CD4-positive, alpha-beta T cell (primary cell): ENCODE measurements at regions of chr18 and their contacts with region 1.

Region 1: DNA sequence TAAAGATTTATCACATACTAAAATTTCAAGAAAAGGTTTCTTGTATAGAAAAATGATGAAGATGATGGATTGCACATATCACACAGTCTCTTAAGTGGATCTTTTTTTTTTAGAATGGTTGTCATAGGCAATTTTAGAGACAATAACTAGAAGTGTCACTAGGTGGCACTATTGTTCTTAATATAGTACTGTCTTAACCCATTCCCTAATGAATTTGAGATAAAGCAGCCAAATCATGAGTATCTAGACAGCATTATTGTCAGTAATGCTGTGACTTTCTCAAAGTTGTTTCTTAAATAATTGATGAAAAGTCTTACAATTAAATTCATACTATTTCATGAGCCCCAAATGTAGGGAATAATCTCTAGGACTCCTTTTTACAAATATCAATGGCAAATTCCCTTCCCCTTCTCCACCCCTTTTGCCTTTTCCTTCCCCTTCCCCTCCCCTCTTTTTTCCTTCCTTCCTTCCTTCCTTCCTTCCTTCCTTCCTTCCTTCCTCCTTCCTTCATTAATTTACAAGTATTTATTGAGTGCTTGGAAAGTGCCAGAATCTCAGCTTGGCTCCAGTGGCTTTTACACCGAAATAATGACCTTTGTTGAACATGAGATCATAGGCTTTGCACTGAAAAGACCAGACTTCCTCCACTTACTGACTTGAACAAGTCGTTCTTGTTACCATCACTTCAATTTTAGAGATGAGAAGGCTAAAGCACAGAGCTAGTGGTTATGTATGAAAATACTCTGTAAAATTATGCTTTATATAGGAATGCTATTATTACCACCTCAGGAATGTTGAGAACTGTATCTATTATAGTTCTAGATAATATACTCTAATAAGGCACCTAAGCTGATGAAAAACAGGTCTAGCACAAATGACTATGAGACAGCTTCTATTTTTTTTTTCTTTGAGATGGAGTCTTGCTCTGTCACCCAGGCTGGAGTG is 19.8 kb downstream of the MYL12B start:
- DNase-seq: peak in 3 of 14 experiments; percentile 79 to 83 (median 83)
- ATAC-seq: peak; percentile 87
- H3K4me3 ChIP-seq: no peak overlapping the region
- H3K4me3 Mint-ChIP-seq: no peak overlapping the region
- H3K27ac ChIP-seq: no peak overlapping the region
- H3K27ac Mint-ChIP-seq: no peak overlapping the region
- H3K4me1 ChIP-seq: no peaks in the 10 kb centered on the region
- H3K4me1 Mint-ChIP-seq: no peaks in the 10 kb centered on the region
- H3K27me3 ChIP-seq: no peaks in the 10 kb centered on the region
- H3K27me3 Mint-ChIP-seq: no peaks in the 10 kb centered on the region
- CTCF ChIP-seq: peak; percentile 82

Region 2: DNA sequence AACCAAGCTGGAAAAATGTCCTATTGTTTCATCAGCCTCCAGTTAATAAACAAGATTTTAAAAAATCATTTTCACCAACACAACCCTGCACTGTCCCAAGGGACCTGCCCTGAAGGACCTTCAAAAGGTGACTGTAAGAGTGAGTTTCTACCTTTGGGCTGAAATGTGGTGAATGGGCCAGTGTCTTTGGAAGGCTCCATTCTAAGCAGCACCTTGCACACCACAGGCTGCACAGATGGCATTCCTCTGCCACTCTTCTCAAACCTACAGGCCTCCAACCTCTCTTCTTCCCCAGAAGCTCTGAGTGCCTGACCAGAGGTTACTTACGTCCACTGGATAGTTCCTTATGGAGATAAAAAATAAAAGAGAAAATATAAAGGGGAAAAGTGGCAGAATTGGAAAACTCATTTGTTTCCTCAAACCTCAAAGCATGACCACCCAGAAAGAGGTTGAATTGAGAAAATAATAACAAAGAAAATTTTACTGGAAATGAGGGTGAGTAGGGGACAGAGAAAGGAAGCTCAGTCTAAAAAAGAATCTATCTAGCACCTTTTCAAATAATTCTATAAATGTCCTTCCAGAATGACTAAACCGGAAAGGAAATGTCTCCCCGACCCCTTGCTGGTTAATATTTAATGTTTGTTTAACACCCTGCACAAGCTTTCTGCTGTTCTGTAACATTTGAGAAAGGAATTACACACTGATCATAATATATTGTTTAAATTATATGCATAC is 886.1 kb before region 1 on chr18:
- CTCF ChIA-PET with region 1: no interaction called
- POLR2A ChIA-PET with region 1: no interaction called
- intact Hi-C with region 1: no loop called
- DNase-seq: no peak
- ATAC-seq: no peak
- H3K4me3 ChIP-seq: no peak overlapping the region
- H3K4me3 Mint-ChIP-seq: no peak overlapping the region
- H3K27ac ChIP-seq: no peak overlapping the region
- H3K27ac Mint-ChIP-seq: no peak overlapping the region
- H3K4me1 ChIP-seq: no peaks in the 10 kb centered on the region
- H3K4me1 Mint-ChIP-seq: no peaks in the 10 kb centered on the region
- H3K27me3 ChIP-seq: no peaks in the 10 kb centered on the region
- H3K27me3 Mint-ChIP-seq: peaks cover 32% of the 10 kb centered on the region
- CTCF ChIP-seq: no peak

Region 3: GRCh38 chr18:3585656-3586509 is 304.2 kb after region 1 on chr18:
- CTCF ChIA-PET with region 1: no interaction called
- POLR2A ChIA-PET with region 1: interaction called, 4 read pairs
- intact Hi-C with region 1: loop called (anchors 2 to 5 kb)
- DNase-seq: peak; percentile 48 to 85 (median 60)
- ATAC-seq: peak; percentile 86
- H3K4me3 ChIP-seq: no peak overlapping the region
- H3K4me3 Mint-ChIP-seq: no peak overlapping the region
- H3K27ac ChIP-seq: no peak overlapping the region
- H3K27ac Mint-ChIP-seq: no peak overlapping the region
- H3K4me1 ChIP-seq: peaks cover 11% of the 10 kb centered on the region
- H3K4me1 Mint-ChIP-seq: peaks cover 12% of the 10 kb centered on the region
- H3K27me3 ChIP-seq: no peaks in the 10 kb centered on the region
- H3K27me3 Mint-ChIP-seq: no peaks in the 10 kb centered on the region
- CTCF ChIP-seq: peak; percentile 77

Region 4: DNA sequence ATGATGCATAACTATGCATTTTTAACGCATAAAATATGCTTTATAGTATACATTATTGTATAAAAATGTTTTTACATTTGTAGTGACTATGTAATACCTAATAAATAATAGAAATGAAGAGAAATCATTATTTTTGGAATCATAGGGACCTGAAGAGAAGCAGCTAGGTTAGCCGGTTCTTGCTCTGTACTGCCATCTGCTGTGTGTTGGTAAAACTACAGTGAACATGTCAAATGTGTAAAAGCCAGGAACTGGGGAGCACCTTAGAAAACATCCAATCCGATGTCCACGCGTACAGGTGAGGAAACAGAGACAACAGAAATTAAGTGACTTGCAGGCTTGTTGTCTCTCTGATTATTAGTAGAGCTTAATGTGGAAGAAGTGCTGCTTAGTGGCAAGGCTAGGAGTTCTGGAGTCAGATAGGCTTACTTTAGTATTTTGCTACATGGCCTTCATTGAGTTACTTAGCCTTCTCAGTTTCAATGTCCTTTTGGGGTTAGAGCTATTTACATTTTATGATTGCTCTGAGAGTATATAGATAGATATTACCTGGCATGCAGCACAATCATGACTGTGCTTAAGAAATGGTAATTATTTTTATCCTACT is 786.9 kb after region 1 on chr18:
- CTCF ChIA-PET with region 1: no interaction called
- POLR2A ChIA-PET with region 1: no interaction called
- intact Hi-C with region 1: loop called in 1 of 2 experiments (anchors 5 kb)
- DNase-seq: peak in 6 of 14 experiments; percentile 1 to 47 (median 21)
- ATAC-seq: peak; percentile 46
- H3K4me3 ChIP-seq: no peak overlapping the region
- H3K4me3 Mint-ChIP-seq: no peak overlapping the region
- H3K27ac ChIP-seq: no peak overlapping the region
- H3K27ac Mint-ChIP-seq: no peak overlapping the region
- H3K4me1 ChIP-seq: no peaks in the 10 kb centered on the region
- H3K4me1 Mint-ChIP-seq: no peaks in the 10 kb centered on the region
- H3K27me3 ChIP-seq: no peaks in the 10 kb centered on the region
- H3K27me3 Mint-ChIP-seq: no peaks in the 10 kb centered on the region
- CTCF ChIP-seq: peak; percentile 75